ENCODE measurements at regions of chr15 and their contacts with region 1.

Region 1: DNA sequence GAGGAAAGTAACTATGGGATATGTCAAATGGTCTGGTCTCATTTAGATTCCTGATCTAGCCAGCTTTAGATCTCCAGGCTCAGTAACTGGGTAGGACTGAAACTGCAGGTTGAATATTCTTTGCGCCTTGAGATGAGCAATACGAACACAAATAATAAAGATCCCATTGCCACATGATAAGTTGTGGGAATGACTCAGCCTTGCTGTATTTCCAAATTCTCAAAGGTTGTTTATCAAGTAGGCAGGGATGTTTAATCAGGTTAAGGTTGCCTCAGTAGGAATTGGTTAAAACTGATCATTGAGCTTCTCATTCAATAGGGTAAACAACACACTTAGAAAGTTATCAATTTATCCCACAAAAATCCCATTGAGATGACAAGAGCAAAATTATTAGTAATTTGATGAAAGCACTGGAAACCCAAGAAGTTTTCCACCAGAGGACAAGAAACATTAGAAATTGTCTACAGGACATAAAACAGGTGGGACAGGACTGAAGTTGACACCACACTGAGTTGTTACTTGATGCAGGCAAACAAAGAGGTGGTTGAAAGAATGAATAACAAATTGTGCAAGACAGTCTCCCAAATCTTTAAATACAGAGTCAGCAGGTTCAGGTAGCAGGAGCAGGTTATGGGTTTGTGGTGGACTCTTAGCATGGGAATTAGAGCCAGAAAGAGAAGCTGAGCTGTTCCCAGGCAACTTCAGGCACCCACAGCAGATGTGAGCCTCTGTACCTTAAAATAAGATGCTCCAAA is 30.4 kb upstream of the ARRDC4 start:
- DNase-seq: no peak
- H3K4me3 ChIP-seq: no peak overlapping the region
- H3K27ac ChIP-seq: no peak overlapping the region
- H3K4me1 ChIP-seq: no peaks in the 10 kb centered on the region
- H3K27me3 ChIP-seq: no peaks in the 10 kb centered on the region
- CTCF ChIP-seq: no peak
- EP300 ChIP-seq: no peak
- POLR2A ChIP-seq: no peak

Region 2: GRCh38 chr15:97995881-97996603 is 66.0 kb after region 1 on chr15:
- intact Hi-C with region 1: loop called in 1 of 4 experiments (anchors 10 kb)
- DNase-seq: no peak
- H3K4me3 ChIP-seq: no peak overlapping the region
- H3K27ac ChIP-seq: no peak overlapping the region
- H3K4me1 ChIP-seq: no peaks in the 10 kb centered on the region
- H3K27me3 ChIP-seq: no peaks in the 10 kb centered on the region
- CTCF ChIP-seq: no peak
- EP300 ChIP-seq: no peak
- POLR2A ChIP-seq: no peak